ENCODE measurements at regions of chr6 and their contacts with region 1.

Region 1: GRCh38 chr6:37018198-37019064 is 13.0 kb downstream of the FGD2 start:
- DNase-seq: peak; percentile 89 to 93 (median 92)
- ATAC-seq: peak; percentile 93 to 97 (median 96)
- H3K4me3 ChIP-seq: no peak overlapping the region
- H3K27ac ChIP-seq: peak overlapping the region in 9 of 12 donors; percentile 6 to 66 (median 34)
- H3K4me1 ChIP-seq: peaks cover 0 to 25% (median 14%) of the 10 kb centered on the region in 12 donors
- H3K27me3 ChIP-seq: no peaks in the 10 kb centered on the region
- CTCF ChIP-seq: peak; percentile 72 to 89 (median 78)
- POLR2A ChIP-seq: no peak

Region 2: GRCh38 chr6:36765594-36766398 is 252.6 kb before region 1 on chr6:
- intact Hi-C with region 1: loop called (anchors 1 to 10 kb)
- DNase-seq: peak; percentile 82 to 88 (median 85)
- ATAC-seq: peak; percentile 62 to 78 (median 69)
- H3K4me3 ChIP-seq: no peak overlapping the region
- H3K27ac ChIP-seq: peak overlapping the region in 1 of 12 donors; percentile 26
- H3K4me1 ChIP-seq: peaks cover 0 to 49% (median 30%) of the 10 kb centered on the region in 12 donors
- H3K27me3 ChIP-seq: no peaks in the 10 kb centered on the region
- CTCF ChIP-seq: peak; percentile 78 to 94 (median 88)
- POLR2A ChIP-seq: no peak

Region 3: GRCh38 chr6:36839749-36840431 is 178.5 kb before region 1 on chr6:
- intact Hi-C with region 1: no loop called
- DNase-seq: peak; percentile 59 to 80 (median 75)
- ATAC-seq: peak in 3 of 4 donors; percentile 6 to 43 (median 24)
- H3K4me3 ChIP-seq: peak overlapping the region; percentile 33 to 76 (median 60)
- H3K27ac ChIP-seq: peak overlapping the region; percentile 65 to 91 (median 75)
- H3K4me1 ChIP-seq: peaks cover 4 to 61% (median 17%) of the 10 kb centered on the region in 12 donors
- H3K27me3 ChIP-seq: peaks cover 0 to 24% (median 0%) of the 10 kb centered on the region in 9 donors
- CTCF ChIP-seq: peak in 10 of 12 donors; percentile 9 to 56 (median 42)
- POLR2A ChIP-seq: no peak

Region 4: DNA sequence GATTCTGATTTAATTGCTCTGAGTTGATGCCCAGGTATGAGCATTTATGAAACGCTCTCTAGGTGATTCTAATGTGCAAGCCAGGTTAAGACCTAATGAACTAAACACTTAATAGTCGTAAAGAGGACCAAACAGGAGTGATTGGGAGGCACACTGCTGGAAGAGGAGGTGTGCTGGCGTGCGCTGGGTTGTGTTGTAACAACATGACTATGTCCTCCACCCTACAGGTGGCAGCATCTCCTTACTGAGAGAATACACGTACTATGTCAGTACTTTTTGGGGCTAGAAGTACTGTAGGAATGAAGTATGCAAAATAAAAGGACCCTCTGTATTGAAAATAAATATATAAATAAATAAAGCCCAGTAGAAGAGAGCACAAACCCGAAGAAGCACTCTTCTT is 120.8 kb before region 1 on chr6:
- intact Hi-C with region 1: loop called in 1 of 10 experiments (anchors 5 kb)
- DNase-seq: no peak
- ATAC-seq: peak in 3 of 4 donors; percentile 49 to 62 (median 54)
- H3K4me3 ChIP-seq: no peak overlapping the region
- H3K27ac ChIP-seq: no peak overlapping the region
- H3K4me1 ChIP-seq: peaks cover 0 to 6% (median 0%) of the 10 kb centered on the region in 12 donors
- H3K27me3 ChIP-seq: no peaks in the 10 kb centered on the region
- CTCF ChIP-seq: peak in 9 of 12 donors; percentile 8 to 42 (median 21)
- POLR2A ChIP-seq: no peak

Region 5: GRCh38 chr6:36985808-36986703 is 32.4 kb before region 1 on chr6 and contains the start of gene MTCH1:
- intact Hi-C with region 1: loop called in 3 of 10 experiments (anchors 2 to 5 kb)
- DNase-seq: peak; percentile 93 to 95 (median 94)
- ATAC-seq: peak; percentile 91 to 96 (median 94)
- H3K4me3 ChIP-seq: peak within 1 kb of the TSS; percentile 91 to 100 (median 98)
- H3K27ac ChIP-seq: peak within 1 kb of the TSS; percentile 89 to 100 (median 98)
- H3K4me1 ChIP-seq: peaks cover 8 to 51% (median 46%) of the 10 kb centered on the region in 12 donors
- H3K27me3 ChIP-seq: no peaks in the 10 kb centered on the region
- CTCF ChIP-seq: peak in 1 of 12 donors; percentile 16
- POLR2A ChIP-seq: peak; percentile 68 to 96
- total RNA-seq, gene MTCH1: 144 to 320 (median 193) TPM

Region 6: GRCh38 chr6:37005061-37005810 is 13.2 kb before region 1 on chr6 and contains the start of gene FGD2:
- intact Hi-C with region 1: no loop called
- DNase-seq: no peak
- ATAC-seq: peak in 1 of 4 donors; percentile 13
- H3K4me3 ChIP-seq: peak within 1 kb of the TSS in 10 of 12 donors; percentile 4 to 70 (median 40)
- H3K27ac ChIP-seq: peak within 1 kb of the TSS in 5 of 12 donors; percentile 3 to 92 (median 26)
- H3K4me1 ChIP-seq: peaks cover 0 to 18% (median 0%) of the 10 kb centered on the region in 12 donors
- H3K27me3 ChIP-seq: no peaks in the 10 kb centered on the region
- CTCF ChIP-seq: no peak
- POLR2A ChIP-seq: no peak
- total RNA-seq, gene FGD2: 1.4 to 45.8 (median 4.9) TPM

Region 7: GRCh38 chr6:37051138-37052026 is 33.0 kb after region 1 on chr6:
- intact Hi-C with region 1: loop called in 1 of 10 experiments (anchors 2 kb)
- DNase-seq: peak; percentile 89 to 95 (median 90)
- ATAC-seq: peak; percentile 41 to 86 (median 81)
- H3K4me3 ChIP-seq: peak overlapping the region in 1 of 12 donors; percentile 36
- H3K27ac ChIP-seq: peak overlapping the region in 2 of 12 donors; percentile 32 to 93
- H3K4me1 ChIP-seq: peaks cover 0 to 55% (median 14%) of the 10 kb centered on the region in 12 donors
- H3K27me3 ChIP-seq: no peaks in the 10 kb centered on the region
- CTCF ChIP-seq: peak; percentile 82 to 96 (median 90)
- POLR2A ChIP-seq: no peak

Region 8: DNA sequence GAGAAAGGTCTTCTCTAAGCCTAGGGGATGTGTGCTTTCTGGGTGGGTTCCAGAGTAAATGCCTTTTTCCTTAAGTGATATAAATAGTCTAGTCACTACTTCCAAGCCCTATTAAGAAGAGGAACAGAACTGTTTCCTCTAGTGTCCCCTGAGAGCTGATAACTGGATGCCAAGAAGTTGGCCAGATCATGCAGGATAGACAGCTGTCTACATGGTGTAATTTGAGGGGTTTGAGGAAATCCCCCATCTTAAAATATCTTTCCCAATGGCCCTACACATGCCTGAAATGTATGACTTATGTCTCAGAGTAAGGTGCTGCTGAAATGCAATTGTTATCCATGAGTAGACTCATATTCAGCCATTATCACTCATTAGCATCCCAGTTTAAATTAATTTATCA is 131.3 kb after region 1 on chr6:
- intact Hi-C with region 1: no loop called
- DNase-seq: no peak
- ATAC-seq: peak in 1 of 4 donors; percentile 39
- H3K4me3 ChIP-seq: no peak overlapping the region
- H3K27ac ChIP-seq: no peak overlapping the region
- H3K4me1 ChIP-seq: peaks cover 0 to 13% (median 5%) of the 10 kb centered on the region in 12 donors
- H3K27me3 ChIP-seq: no peaks in the 10 kb centered on the region
- CTCF ChIP-seq: no peak
- POLR2A ChIP-seq: no peak

Region 9: DNA sequence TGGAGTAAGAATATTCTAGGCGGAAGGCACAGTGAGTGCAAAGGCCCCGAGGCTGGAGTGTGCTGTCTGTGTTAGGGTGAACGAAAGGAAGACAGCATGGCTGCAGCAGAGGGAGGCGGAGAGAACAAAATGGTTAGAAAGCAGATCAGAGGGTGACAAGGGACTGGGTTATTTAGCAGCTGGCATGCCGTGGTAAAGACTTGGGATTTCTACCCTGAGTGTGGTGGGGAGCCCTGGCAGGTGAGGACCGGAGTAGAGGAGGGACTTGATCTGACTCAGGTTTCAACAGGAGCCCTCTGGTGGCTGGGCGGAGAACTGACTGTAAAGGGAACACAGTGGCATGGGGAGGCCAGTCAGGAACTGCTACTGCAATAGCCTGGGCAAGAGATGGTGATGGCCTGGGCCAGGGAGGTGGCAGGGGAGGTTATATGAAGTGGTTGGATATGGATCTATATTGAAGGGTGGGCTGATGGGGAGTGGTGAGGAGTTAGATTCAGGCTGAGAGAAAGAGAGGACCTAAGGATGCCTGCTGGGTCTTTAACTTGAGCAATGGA is 189.5 kb after region 1 on chr6:
- intact Hi-C with region 1: loop called in 7 of 10 experiments (anchors 1 to 10 kb)
- DNase-seq: peak; percentile 64 to 91 (median 80)
- ATAC-seq: peak in 3 of 4 donors; percentile 70 to 82 (median 70)
- H3K4me3 ChIP-seq: no peak overlapping the region
- H3K27ac ChIP-seq: peak overlapping the region in 1 of 12 donors; percentile 51
- H3K4me1 ChIP-seq: peaks cover 0 to 56% (median 0%) of the 10 kb centered on the region in 12 donors
- H3K27me3 ChIP-seq: no peaks in the 10 kb centered on the region
- CTCF ChIP-seq: peak; percentile 47 to 77 (median 60)
- POLR2A ChIP-seq: no peak

Region 10: GRCh38 chr6:37365762-37366161 is 347.3 kb after region 1 on chr6:
- intact Hi-C with region 1: no loop called
- DNase-seq: no peak
- ATAC-seq: peak; percentile 48 to 62 (median 56)
- H3K4me3 ChIP-seq: no peak overlapping the region
- H3K27ac ChIP-seq: no peak overlapping the region
- H3K4me1 ChIP-seq: peaks cover 0 to 40% (median 26%) of the 10 kb centered on the region in 12 donors
- H3K27me3 ChIP-seq: no peaks in the 10 kb centered on the region
- CTCF ChIP-seq: peak in 9 of 12 donors; percentile 17 to 53 (median 41)
- POLR2A ChIP-seq: no peak

Measured in heart left ventricle (tissue), 16 donors.